HCT116 (cell line): ENCODE measurements at regions of chr6 and their contacts with region 1.

Region 1: DNA sequence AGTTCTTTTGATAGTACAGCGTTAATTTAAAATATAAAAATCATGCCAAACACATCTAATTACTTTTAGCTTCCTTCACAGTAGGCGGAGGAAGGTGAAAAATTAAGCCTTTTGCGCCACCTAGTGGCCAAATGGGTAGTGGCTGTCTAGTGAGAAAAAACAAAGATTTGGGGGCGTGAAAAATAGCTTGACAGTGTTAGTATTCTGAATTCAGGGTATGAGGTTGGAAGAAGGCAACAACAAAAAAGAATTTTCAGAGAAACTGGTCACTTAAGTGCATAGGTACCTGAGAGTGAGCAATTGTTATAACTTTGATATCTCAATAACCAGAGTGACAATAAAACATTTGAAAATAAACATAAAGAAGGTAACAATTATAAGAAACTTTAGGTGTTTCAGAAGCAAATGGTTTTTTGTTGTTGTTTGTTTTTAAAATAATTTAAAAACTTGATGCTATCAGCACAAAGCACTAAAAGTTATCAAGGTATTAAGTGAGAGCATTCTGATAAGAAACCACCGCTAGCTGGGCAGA is 14.3 kb downstream of the PSMB9 start:
- DNase-seq: peak; percentile 63
- ATAC-seq: peak; percentile 88
- H3K4me3 ChIP-seq: no peak overlapping the region
- H3K27ac ChIP-seq: no peak overlapping the region
- H3K4me1 ChIP-seq: peaks cover 0 to 4% of the 10 kb centered on the region in 2 experiments; a peak in 1 of 4 replicates
- H3K27me3 ChIP-seq: no peaks in the 10 kb centered on the region
- CTCF ChIP-seq: peak; percentile 82 to 94 (median 93)
- POLR2A ChIP-seq: no peak
- RAD21 ChIP-seq: peak; percentile 93

Region 2: GRCh38 chr6:32413427-32414047 is 454.8 kb before region 1 on chr6:
- CTCF ChIA-PET with region 1: interaction called, 7 read pairs
- POLR2A ChIA-PET with region 1: no interaction called
- RAD21 ChIA-PET with region 1: interaction called in 1 of 2 experiments, 3 read pairs
- intact Hi-C with region 1: loop called (anchors 2 kb)
- DNase-seq: peak; percentile 69
- ATAC-seq: peak; percentile 85
- H3K4me3 ChIP-seq: no peak overlapping the region; a peak in 1 of 4 replicates
- H3K27ac ChIP-seq: no peak overlapping the region
- H3K4me1 ChIP-seq: peaks cover 0 to 12% of the 10 kb centered on the region in 2 experiments; a peak in 2 of 4 replicates
- H3K27me3 ChIP-seq: no peaks in the 10 kb centered on the region
- CTCF ChIP-seq: peak; percentile 73 to 91 (median 88)
- POLR2A ChIP-seq: no peak
- RAD21 ChIP-seq: peak; percentile 89

Region 3: DNA sequence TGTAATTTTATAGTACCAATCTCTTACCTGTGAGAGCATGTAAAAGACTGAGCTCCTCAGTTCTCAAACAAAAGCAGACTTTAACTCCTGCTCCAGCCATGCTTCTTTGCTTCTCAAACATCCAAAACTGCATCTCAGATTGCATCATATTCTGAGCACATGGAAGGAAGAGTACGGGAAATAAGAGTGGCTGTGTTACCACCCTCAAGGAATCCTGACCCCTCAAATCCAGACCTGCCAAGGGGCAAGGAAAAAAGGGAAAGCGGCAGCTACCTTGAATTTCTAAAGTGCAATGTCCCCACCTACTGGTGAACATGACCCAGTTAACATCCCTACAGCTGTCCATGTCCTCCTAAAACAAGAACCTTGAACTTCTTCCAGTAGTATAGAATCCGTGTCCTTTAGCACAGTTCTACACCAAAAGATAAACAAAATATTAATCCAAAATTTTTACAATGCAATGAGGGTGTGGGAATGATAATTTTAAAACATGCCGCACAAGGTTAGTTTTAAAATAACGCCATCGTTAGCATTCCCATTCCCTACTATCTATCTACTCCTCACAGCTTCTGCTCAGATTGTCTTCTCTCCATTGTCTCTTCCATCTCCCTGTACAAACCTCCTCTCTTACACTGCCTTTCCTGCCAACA is 167.8 kb before region 1 on chr6:
- CTCF ChIA-PET with region 1: interaction called, 9 read pairs
- POLR2A ChIA-PET with region 1: no interaction called
- RAD21 ChIA-PET with region 1: interaction called in 1 of 2 experiments, 4 read pairs
- intact Hi-C with region 1: loop called (anchors 2 kb)
- DNase-seq: peak; percentile 61
- ATAC-seq: peak; percentile 93
- H3K4me3 ChIP-seq: no peak overlapping the region
- H3K27ac ChIP-seq: no peak overlapping the region
- H3K4me1 ChIP-seq: no peaks in the 10 kb centered on the region
- H3K27me3 ChIP-seq: no peaks in the 10 kb centered on the region
- CTCF ChIP-seq: peak; percentile 68 to 83 (median 75)
- POLR2A ChIP-seq: no peak
- RAD21 ChIP-seq: peak; percentile 87

Region 4: DNA sequence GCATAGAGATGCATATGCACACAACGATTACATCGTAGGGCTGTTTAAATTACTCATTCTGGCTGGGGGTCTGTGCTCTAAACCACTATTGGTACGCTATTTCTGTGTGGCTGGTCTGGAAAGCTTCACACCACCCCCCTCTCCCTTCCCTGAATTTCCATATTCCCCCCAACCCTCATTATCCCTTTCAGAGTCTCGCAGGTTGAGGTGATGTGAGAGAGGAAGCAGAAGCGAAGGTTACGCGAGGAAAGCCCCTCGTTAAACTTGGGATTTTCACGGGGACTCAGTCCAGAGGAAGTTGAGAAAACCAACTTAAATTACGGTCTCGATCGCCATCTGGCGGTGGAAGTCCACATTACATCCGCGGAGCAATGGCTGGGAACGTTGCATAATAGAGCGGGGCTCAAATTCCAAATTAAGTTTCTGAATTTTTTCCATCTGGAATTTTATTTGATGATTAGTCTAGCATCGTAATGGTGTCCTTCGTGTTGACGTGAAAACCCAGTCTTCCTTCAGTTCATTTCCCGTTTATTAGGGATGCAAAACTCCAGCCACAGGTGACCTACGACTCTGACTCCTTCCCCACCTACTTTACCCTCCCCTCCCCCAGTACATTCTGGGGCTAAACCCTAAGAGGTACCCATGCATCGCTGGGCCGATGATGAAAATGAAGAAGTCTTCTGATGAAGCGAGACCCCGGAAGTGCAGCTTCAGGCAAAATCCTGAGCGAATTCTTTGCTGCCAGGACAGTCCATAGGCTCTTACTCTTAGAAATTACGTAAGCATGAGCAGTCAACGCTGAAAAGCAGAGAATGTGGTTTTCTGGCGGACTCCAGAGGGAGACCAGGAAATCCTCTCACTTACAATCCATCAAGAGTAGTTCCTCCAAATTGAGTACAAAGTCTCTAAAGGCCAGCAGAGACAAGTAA is 71.2 kb before region 1 on chr6:
- CTCF ChIA-PET with region 1: interaction called, 11 read pairs
- POLR2A ChIA-PET with region 1: no interaction called
- RAD21 ChIA-PET with region 1: interaction called in 1 of 2 experiments, 3 read pairs
- intact Hi-C with region 1: loop called (anchors 2 kb)
- DNase-seq: peak; percentile 31
- ATAC-seq: peak; percentile 93
- H3K4me3 ChIP-seq: peak overlapping the region; percentile 24 to 45
- H3K27ac ChIP-seq: no peak overlapping the region
- H3K4me1 ChIP-seq: peaks cover 0 to 5% of the 10 kb centered on the region in 2 experiments; a peak in 1 of 4 replicates
- H3K27me3 ChIP-seq: peaks cover 34% of the 10 kb centered on the region
- CTCF ChIP-seq: peak; percentile 67 to 91 (median 72); a peak in 5 of 6 replicates
- POLR2A ChIP-seq: no peak
- RAD21 ChIP-seq: peak; percentile 86

Region 5: DNA sequence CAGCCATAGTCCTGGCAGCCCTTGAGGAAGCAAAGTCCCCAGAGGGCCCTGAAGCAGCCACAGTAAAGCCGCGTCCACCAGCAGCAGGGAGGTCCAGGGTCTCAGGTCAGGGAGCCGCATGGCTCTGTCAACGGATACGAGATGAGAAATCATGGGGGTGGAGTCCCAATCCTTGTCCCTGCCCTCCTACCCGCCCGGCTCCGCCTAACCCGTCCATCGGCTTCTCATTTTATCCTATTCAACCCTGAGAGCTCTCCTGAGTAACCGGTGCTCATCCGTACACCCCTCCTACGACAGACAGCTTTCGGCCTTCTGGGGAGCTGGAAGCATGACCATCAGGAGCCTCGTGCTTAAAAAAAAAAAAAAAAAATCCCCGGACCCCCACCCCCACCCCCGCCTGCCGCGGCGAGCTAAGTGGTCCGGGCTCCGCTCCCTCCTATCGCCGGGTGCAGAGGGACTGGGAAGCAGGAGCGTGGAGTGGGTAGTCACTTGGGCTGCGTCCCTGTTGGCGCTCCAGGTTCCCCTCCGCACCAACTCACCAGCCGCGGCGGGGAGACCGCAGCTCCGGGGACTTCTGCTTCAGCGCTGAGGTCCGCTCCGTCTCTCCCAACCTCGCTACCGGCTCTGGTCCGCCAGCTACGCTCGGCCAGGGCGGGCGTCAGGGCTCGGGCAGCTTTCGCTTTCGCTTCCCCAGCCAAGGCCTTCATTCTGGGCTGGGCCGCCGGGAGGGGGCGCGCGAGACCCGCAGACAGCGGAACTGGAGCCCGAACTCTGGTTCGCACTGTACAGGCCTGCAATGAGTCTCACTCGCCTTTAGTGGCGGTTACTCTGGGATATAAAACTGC is 30.0 kb before region 1 on chr6 and contains the start of gene TAP2:
- CTCF ChIA-PET with region 1: interaction called, 189 read pairs
- POLR2A ChIA-PET with region 1: interaction called, 23 read pairs
- RAD21 ChIA-PET with region 1: interaction called, 34 to 36 read pairs
- intact Hi-C with region 1: loop called (anchors 1 kb)
- DNase-seq: peak; percentile 79
- ATAC-seq: peak; percentile 92
- H3K4me3 ChIP-seq: peak within 1 kb of the TSS; percentile 83 to 84
- H3K27ac ChIP-seq: peak within 1 kb of the TSS; percentile 81
- H3K4me1 ChIP-seq: peaks cover 6 to 20% of the 10 kb centered on the region in 2 experiments; a peak in 3 of 4 replicates
- H3K27me3 ChIP-seq: no peaks in the 10 kb centered on the region
- CTCF ChIP-seq: peak; percentile 88 to 96 (median 91)
- POLR2A ChIP-seq: peak; percentile 84
- RAD21 ChIP-seq: peak; percentile 97
- total RNA-seq, gene TAP2: 59.9 TPM

Region 6: GRCh38 chr6:32853541-32854375 is 14.6 kb before region 1 on chr6 and contains the starts of genes PSMB9 and TAP1:
- CTCF ChIA-PET with region 1: interaction called, 17 read pairs
- POLR2A ChIA-PET with region 1: no interaction called
- RAD21 ChIA-PET with region 1: no interaction called
- intact Hi-C with region 1: no loop called
- DNase-seq: peak; percentile 88
- ATAC-seq: peak; percentile 93
- H3K4me3 ChIP-seq: peak within 1 kb of the TSS; percentile 88 to 95
- H3K27ac ChIP-seq: peak within 1 kb of the TSS; percentile 84
- H3K4me1 ChIP-seq: peaks cover 8 to 17% of the 10 kb centered on the region in 2 experiments; a peak in 3 of 4 replicates
- H3K27me3 ChIP-seq: no peaks in the 10 kb centered on the region
- CTCF ChIP-seq: peak; percentile 64 to 93 (median 81)
- POLR2A ChIP-seq: peak; percentile 42
- RAD21 ChIP-seq: peak; percentile 76
- total RNA-seq, gene PSMB9: 8.1 TPM
- total RNA-seq, gene TAP1: 32.2 TPM